B cell (primary cell): ENCODE measurements at regions of chr19 and their contacts with region 1.

Region 1: DNA sequence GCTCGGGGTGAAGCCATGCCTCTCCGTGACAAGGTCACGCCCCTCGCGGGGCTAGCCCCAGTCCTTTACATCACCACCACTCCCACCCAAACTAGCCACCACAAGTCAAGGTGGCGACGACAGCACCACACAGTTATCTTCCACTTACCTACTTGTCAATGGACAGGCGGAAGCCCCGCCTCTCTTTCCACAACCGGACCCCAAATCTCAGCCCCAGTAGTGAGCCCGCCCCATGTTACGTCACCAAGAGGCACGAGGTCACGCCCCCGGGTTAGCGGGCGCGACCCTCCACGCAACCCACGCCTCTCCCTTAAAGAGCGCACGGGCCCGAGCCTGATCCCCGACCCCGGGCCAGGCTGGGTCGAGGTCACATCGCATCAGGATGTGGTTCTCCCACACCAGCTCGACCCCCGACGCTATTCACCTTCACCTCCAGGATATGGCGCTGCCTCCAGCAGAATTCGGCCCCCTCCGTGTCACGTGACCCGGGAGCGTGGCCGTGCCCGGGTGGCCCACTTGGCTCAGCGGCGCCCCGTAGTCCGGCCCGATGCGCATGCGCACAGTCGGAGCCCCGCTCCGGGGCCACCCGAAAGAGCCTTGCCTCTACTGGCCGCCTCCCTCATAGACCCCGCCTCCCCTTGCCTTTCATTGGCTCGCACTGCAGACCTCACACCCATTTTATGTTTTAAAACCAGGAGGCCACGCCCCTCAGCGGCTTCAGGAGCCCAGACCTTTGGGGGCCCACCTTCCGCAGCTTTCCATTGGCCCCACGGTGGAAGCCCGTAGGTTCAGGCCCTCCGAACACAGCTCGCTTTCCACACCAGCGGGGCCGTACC is 18.2 kb downstream of the SYDE1 start:
- DNase-seq: peak; percentile 99
- ATAC-seq: peak; percentile 84
- H3K4me3 ChIP-seq: peak overlapping the region; percentile 60 to 87 (median 85)
- H3K4me3 Mint-ChIP-seq: peak overlapping the region; percentile 98
- H3K27ac ChIP-seq: peak overlapping the region; percentile 87 to 97
- H3K27ac Mint-ChIP-seq: peak overlapping the region; percentile 97
- H3K4me1 ChIP-seq: peaks cover 10 to 12% of the 10 kb centered on the region in 2 donors
- H3K4me1 Mint-ChIP-seq: peaks cover 19% of the 10 kb centered on the region
- H3K27me3 ChIP-seq: no peaks in the 10 kb centered on the region
- H3K27me3 Mint-ChIP-seq: peaks cover 9% of the 10 kb centered on the region
- CTCF ChIP-seq: no peak

Region 2: GRCh38 chr19:16197622-16198369 is 1072.3 kb after region 1 on chr19 and contains the start of gene AP1M1:
- CTCF ChIA-PET with region 1: no interaction called
- POLR2A ChIA-PET with region 1: no interaction called
- intact Hi-C with region 1: loop called (anchors 5 kb)
- DNase-seq: peak; percentile 99
- ATAC-seq: peak; percentile 93
- H3K4me3 ChIP-seq: peak within 1 kb of the TSS; percentile 67 to 92 (median 87)
- H3K4me3 Mint-ChIP-seq: peak within 1 kb of the TSS; percentile 93
- H3K27ac ChIP-seq: peak within 1 kb of the TSS; percentile 66 to 92
- H3K27ac Mint-ChIP-seq: peak within 1 kb of the TSS; percentile 98
- H3K4me1 ChIP-seq: peaks cover 18 to 28% of the 10 kb centered on the region in 2 donors
- H3K4me1 Mint-ChIP-seq: peaks cover 35% of the 10 kb centered on the region
- H3K27me3 ChIP-seq: no peaks in the 10 kb centered on the region
- H3K27me3 Mint-ChIP-seq: no peaks in the 10 kb centered on the region
- CTCF ChIP-seq: no peak
- total RNA-seq, gene AP1M1: 90.4 and 102 TPM in 2 replicates